Activated CD4-positive, alpha-beta T cell treated with anti-CD3 and anti-CD28 coated beads, Interleukin-2, amount 10 ng/mL, durations not matched to agents 24 days and 14 days (primary cell): ENCODE measurements at regions of chr14 and their contacts with region 1.

Region 1: DNA sequence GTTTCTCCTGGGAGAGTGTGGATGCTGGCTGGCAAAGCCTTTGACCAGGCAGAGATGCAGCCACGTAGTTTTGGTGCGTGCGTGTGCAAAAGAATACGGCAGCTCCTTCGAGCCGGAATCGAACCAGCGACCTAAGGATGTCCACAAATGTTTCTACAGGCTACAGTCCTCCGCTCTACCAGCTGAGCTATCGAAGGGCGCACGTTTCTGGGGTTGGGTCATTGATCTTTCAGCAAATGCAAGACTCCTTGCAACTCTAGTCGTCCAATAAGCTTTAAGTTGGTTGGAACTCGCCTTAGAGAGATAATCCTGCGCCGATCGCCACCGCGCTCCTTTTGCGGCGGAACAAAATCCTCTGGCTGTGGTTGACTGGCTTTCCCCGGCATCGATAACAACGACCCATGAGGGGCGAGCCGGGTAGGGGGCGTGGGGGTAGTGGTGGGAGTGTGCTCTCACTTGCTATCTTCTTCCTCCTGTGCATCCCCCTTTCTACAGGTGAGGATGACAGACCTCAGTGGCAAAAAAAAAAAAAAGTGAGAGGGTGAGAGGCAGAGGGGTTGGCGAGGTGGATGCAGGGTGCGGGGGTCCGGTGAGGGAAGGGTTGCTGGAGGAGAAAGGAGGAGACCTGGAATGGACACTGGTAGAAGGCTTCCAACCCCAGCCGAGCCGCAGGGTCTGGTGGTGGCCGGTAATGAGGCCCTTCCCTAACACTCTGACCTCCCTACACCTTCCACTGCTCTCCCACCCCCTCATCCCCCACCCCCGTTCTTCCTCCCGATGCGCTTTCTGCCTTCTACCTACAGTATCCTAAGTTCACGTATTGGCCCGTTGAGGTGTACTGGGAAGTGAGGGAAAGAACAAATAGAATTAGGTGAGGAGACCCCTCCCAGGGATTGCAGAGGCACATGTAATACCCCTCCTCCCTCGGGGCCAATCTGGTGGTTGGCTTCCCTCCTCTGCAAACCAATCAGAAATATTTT is 11.8 kb upstream of the OR6S1 start:
- DNase-seq: peak; percentile 82
- H3K4me3 Mint-ChIP-seq: peak overlapping the region; percentile 66
- H3K27ac Mint-ChIP-seq: no peak overlapping the region
- H3K4me1 Mint-ChIP-seq: peaks cover 27% of the 10 kb centered on the region
- H3K27me3 Mint-ChIP-seq: peaks cover 66% of the 10 kb centered on the region

Region 2: GRCh38 chr14:20454516-20455354 is 198.6 kb before region 1 on chr14 and contains the starts of genes APEX1 and OSGEP:
- intact Hi-C with region 1: no loop called
- DNase-seq: peak; percentile 99
- H3K4me3 Mint-ChIP-seq: peak within 1 kb of the TSS; percentile 59
- H3K27ac Mint-ChIP-seq: no peak within 1 kb of the TSS
- H3K4me1 Mint-ChIP-seq: peaks cover 20% of the 10 kb centered on the region
- H3K27me3 Mint-ChIP-seq: no peaks in the 10 kb centered on the region
- total RNA-seq, gene APEX1: 239 and 242 TPM in 2 replicates
- total RNA-seq, gene OSGEP: 69.8 and 76.9 TPM in 2 replicates

Region 3: GRCh38 chr14:20530771-20531571 is 122.3 kb before region 1 on chr14:
- intact Hi-C with region 1: no loop called
- DNase-seq: peak; percentile 88
- H3K4me3 Mint-ChIP-seq: peak overlapping the region; percentile 4
- H3K27ac Mint-ChIP-seq: no peak overlapping the region
- H3K4me1 Mint-ChIP-seq: peaks cover 6% of the 10 kb centered on the region
- H3K27me3 Mint-ChIP-seq: peaks cover 49% of the 10 kb centered on the region

Region 4: DNA sequence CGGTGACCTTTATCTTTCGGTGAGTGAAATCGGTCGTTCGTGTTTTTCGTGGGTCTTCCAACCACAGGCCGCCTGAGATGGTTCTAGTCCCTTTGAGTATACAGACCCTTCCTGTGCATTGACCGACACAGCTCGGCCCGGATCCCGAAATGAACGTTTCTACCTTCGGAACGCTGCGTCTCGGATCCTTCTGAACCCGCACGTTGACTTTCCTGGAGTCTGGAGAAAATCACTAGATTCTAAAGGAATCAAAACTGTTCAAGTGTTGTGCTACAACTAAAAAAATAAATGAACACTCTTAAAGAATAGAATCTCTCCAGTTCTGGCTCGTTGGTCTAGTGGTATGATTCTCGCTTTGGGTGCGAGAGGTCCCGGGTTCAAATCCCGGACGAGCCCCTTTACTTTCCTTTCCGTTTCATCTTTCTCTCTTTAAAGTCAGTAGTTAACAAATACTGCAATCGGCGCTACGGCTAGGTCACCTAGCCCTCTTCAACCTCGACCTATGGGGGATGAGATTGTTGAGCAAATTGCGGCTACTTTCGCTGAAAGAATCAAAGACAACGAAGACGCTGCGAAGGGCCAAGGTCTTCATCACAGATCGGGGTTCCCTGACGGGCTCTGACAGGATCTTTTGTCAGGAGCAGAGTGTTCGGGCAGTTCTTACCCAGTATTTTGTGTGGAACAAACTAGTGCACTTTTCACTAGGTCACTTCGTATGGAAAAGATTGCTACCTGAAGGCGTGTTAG is 20.4 kb before region 1 on chr14:
- intact Hi-C with region 1: loop called (anchors 1 kb)
- DNase-seq: peak; percentile 89
- H3K4me3 Mint-ChIP-seq: peak overlapping the region; percentile 88
- H3K27ac Mint-ChIP-seq: peak overlapping the region; percentile 84
- H3K4me1 Mint-ChIP-seq: peaks cover 38% of the 10 kb centered on the region
- H3K27me3 Mint-ChIP-seq: peaks cover 75% of the 10 kb centered on the region